PC-3 (cell line): ENCODE measurements at regions of chr6 and their contacts with region 1.

Region 1: DNA sequence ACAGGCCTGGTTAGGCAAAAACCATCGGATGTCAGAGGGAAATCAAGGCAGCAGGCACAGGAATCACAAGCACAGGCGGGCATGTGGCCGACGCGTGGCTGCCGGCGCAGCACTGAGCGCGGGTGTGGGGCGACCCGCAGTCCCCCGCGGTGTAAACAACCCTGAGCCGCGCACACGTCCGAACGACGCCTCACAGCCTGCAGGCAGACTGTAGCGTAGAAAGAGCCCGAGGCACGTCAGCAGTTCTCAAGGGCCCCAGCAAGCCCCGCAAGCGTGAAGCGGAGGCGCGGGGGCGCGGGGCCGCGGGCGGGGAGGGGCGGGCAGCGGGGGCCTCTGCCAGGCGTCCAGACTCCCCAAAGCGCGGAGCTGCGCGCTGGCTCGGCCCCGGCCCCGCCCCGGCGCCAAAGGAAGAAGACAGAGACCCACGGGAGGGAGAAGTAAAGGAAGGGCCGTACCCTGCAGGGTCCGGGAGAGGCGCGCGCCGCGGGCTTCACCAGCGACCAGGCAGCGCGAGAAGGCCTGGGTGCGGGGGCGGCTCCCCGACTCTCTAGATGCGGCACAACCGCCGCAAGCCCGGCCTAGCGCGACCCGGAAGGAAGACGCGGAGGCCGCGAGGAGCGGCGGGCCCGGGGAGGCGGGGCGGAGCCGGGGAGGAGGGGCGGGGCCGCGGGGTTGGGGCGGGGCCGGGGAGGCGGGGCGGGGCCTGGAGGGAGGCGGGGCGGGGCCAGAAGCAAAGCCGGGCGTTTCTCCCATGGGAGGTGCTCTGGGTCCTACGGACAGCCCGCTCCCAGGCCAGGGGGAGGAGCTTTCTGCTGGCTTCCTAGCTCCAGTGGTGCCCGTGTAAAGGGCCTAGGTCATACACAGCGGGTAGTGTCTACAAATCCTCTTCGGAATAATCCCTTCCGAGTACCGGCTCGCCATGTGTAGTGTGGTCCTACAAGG is at the start of gene FBXL4:
- DNase-seq: peak; percentile 68
- ATAC-seq: peak; percentile 87
- H3K4me3 ChIP-seq: peak within 1 kb of the TSS; percentile 72
- H3K27ac ChIP-seq: no peak within 1 kb of the TSS
- H3K4me1 ChIP-seq: peaks cover 16% of the 10 kb centered on the region; the same call in 1 of the 2 replicates
- H3K27me3 ChIP-seq: no peaks in the 10 kb centered on the region
- CTCF ChIP-seq: no peak
- total RNA-seq, gene FBXL4: 2.1 and 3.8 TPM in 2 replicates

Region 2: GRCh38 chr6:97995158-97995557 is 952.5 kb before region 1 on chr6:
- CTCF ChIA-PET with region 1: no interaction called
- POLR2A ChIA-PET with region 1: no interaction called
- intact Hi-C with region 1: no loop called
- DNase-seq: no peak
- ATAC-seq: no peak
- H3K4me3 ChIP-seq: no peak overlapping the region
- H3K27ac ChIP-seq: no peak overlapping the region
- H3K4me1 ChIP-seq: no peaks in the 10 kb centered on the region
- H3K27me3 ChIP-seq: 0 out of 2 replicates have a peak, but pooled peaks cover 7% of the 10 kb centered on the region
- CTCF ChIP-seq: no peak

Region 3: GRCh38 chr6:98871057-98871456 is 76.6 kb before region 1 on chr6:
- CTCF ChIA-PET with region 1: no interaction called
- POLR2A ChIA-PET with region 1: no interaction called
- intact Hi-C with region 1: loop called (anchors 5 kb)
- DNase-seq: peak; percentile 50
- ATAC-seq: peak; percentile 85
- H3K4me3 ChIP-seq: no peak overlapping the region
- H3K27ac ChIP-seq: no peak overlapping the region
- H3K4me1 ChIP-seq: peaks cover 6% of the 10 kb centered on the region
- H3K27me3 ChIP-seq: no peaks in the 10 kb centered on the region
- CTCF ChIP-seq: no peak

Region 4: DNA sequence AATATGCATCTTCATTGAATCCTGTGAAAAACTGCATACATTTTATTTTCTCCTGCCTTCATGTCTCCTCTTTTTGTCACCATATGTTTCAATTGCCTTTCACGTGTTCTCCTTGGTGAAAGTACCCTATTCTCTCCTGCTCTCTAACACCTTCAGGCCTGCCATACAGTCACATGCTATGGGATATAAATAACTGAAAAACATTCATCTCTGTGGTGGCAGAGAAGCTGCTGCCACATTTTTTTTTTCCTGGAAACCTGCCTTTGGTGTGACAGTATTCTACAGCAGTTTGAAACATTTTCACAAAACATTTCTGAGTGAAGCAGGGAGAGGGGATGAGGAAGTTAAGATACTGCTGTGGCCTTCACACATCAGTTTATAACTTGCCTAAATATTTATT is 44.9 kb after region 1 on chr6:
- CTCF ChIA-PET with region 1: no interaction called
- POLR2A ChIA-PET with region 1: no interaction called
- intact Hi-C with region 1: no loop called
- DNase-seq: no peak
- ATAC-seq: no peak
- H3K4me3 ChIP-seq: no peak overlapping the region
- H3K27ac ChIP-seq: no peak overlapping the region
- H3K4me1 ChIP-seq: no peaks in the 10 kb centered on the region
- H3K27me3 ChIP-seq: peaks cover 8% of the 10 kb centered on the region; the same call in 1 of the 2 replicates
- CTCF ChIP-seq: no peak

Region 5: GRCh38 chr6:99032396-99032795 is 84.8 kb after region 1 on chr6:
- CTCF ChIA-PET with region 1: no interaction called
- POLR2A ChIA-PET with region 1: no interaction called
- intact Hi-C with region 1: no loop called
- DNase-seq: no peak
- ATAC-seq: no peak
- H3K4me3 ChIP-seq: no peak overlapping the region
- H3K27ac ChIP-seq: no peak overlapping the region
- H3K4me1 ChIP-seq: no peaks in the 10 kb centered on the region
- H3K27me3 ChIP-seq: peaks cover 44% of the 10 kb centered on the region
- CTCF ChIP-seq: no peak